Activated CD8-positive, alpha-beta T cell treated with anti-CD3 and anti-CD28 coated beads, Interleukin-2, amount 10 ng/mL, durations not matched to agents 7 days and 5 days (primary cell): ENCODE measurements at regions of chr12 and their contacts with region 1.

Region 1: DNA sequence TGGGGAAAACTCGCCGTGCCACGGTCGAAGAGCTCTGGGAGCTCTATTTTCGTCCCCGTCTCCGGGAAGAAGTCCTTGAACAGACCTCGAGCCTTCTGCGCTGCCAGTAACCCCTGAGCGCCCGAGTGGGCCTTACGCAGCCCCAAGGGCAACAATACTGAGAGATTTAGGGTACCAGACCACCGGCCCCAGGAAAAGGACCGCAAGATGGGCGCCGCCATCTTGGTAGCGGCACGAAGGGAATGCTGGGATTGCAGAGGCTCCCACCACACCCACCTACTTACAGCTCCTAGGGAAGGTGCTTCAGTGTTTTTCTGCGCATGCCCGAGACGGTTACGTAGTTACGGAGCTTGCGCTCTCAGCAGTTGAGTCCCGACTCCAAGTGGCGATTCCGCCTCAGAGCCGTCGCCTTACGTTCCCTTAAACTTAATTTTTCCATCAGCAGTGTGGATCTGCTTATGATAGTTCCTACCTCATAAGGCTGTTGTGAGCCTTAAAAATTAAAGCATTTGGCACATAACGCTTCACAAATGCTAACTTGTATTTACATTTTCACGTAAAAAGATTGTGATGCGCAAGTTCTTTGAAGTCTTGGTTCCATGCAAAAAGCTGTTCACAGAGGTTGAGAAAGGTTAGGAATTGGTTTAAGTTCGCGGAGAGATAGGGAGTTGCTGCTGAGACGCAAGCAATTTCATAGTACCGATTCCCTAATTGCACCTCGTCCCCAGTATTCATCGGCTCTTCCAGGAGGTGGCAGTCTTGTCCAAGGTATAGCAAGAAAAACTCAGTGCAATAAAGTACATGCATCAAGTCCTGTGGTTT is at the start of gene YARS2:
- DNase-seq: peak; percentile 93
- ATAC-seq: peak; percentile 94
- H3K4me3 Mint-ChIP-seq: peak within 1 kb of the TSS; percentile 93
- H3K27ac Mint-ChIP-seq: peak within 1 kb of the TSS; percentile 78
- H3K4me1 Mint-ChIP-seq: peaks cover 20% of the 10 kb centered on the region
- H3K27me3 Mint-ChIP-seq: no peaks in the 10 kb centered on the region
- total RNA-seq, gene YARS2: 19.4 to 20.2 TPM

Region 2: DNA sequence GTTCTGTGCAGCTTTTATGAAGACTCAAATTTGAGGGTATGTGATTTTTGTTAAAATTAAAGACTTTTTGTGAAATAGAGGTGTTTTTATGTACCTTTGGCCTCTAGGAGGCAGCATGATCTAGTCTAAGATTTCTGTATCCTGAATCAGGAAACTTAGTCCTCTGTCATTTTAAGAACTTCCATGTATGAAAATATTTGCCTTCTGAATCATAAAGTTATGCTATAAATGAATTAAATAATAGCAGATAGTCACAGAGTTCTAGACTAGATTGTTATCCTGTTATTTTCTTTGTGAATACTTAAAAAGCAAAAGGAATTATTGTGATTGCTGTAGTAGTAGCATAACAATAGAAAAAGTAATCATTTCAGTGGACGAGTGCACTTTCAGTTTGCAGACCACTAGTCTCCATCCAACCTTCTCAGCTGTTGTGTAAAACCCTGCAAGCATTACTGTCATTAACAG is 300.2 kb before region 1 on chr12:
- CTCF ChIA-PET with region 1: interaction called, 49 read pairs
- POLR2A ChIA-PET with region 1: no interaction called
- DNase-seq: peak; percentile 42
- ATAC-seq: no peak
- H3K4me3 Mint-ChIP-seq: no peak overlapping the region
- H3K27ac Mint-ChIP-seq: no peak overlapping the region
- H3K4me1 Mint-ChIP-seq: peaks cover 3% of the 10 kb centered on the region
- H3K27me3 Mint-ChIP-seq: peaks cover 6% of the 10 kb centered on the region

Region 3: GRCh38 chr12:32688786-32689185 is 67.1 kb before region 1 on chr12:
- CTCF ChIA-PET with region 1: interaction called, 10 read pairs
- POLR2A ChIA-PET with region 1: no interaction called
- DNase-seq: no peak
- ATAC-seq: no peak
- H3K4me3 Mint-ChIP-seq: no peak overlapping the region
- H3K27ac Mint-ChIP-seq: no peak overlapping the region
- H3K4me1 Mint-ChIP-seq: peaks cover 12% of the 10 kb centered on the region
- H3K27me3 Mint-ChIP-seq: no peaks in the 10 kb centered on the region

Region 4: GRCh38 chr12:32743264-32743663 is 12.6 kb before region 1 on chr12:
- CTCF ChIA-PET with region 1: interaction called, 21 read pairs
- POLR2A ChIA-PET with region 1: no interaction called
- DNase-seq: no peak
- ATAC-seq: no peak
- H3K4me3 Mint-ChIP-seq: no peak overlapping the region
- H3K27ac Mint-ChIP-seq: no peak overlapping the region
- H3K4me1 Mint-ChIP-seq: no peaks in the 10 kb centered on the region
- H3K27me3 Mint-ChIP-seq: no peaks in the 10 kb centered on the region

Region 5: GRCh38 chr12:34022079-34022830 is 1266.4 kb after region 1 on chr12 and contains the start of gene ALG10:
- CTCF ChIA-PET with region 1: interaction called, 103 read pairs
- POLR2A ChIA-PET with region 1: interaction called, 6 read pairs
- DNase-seq: peak; percentile 97
- ATAC-seq: peak; percentile 99
- H3K4me3 Mint-ChIP-seq: peak within 1 kb of the TSS; percentile 97
- H3K27ac Mint-ChIP-seq: peak within 1 kb of the TSS; percentile 98
- H3K4me1 Mint-ChIP-seq: peaks cover 24% of the 10 kb centered on the region
- H3K27me3 Mint-ChIP-seq: no peaks in the 10 kb centered on the region
- total RNA-seq, gene ALG10: 15.4 to 15.7 TPM